Activated CD4-positive, alpha-beta T cell treated with anti-CD3 and anti-CD28 coated beads, Interleukin-2, amount 10 ng/mL, durations not matched to agents 24 days and 14 days (primary cell): ENCODE measurements at regions of chr6 and their contacts with region 1.

Region 1: DNA sequence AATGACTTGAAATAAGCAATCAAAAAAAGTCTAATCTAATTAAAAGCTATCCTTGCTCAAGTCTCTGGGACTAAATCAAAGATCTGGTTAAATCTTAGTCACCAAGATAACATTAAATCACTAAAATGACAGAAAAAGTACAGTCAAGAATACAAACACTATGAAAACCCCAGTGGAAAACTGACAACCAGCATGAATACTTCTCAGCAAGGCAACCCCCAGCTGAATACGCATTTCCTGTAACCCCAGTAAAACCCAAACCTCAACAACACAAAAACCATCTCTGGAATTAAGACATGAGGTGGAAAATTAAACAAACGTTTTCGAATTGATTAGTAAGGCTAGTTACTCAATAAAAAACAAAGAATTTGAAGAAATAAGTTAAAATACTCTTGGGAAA is 23.7 kb upstream of the ZC3H12D start:
- DNase-seq: peak; percentile 83
- H3K4me3 Mint-ChIP-seq: peak overlapping the region; percentile 33
- H3K27ac Mint-ChIP-seq: peak overlapping the region; percentile 92
- H3K4me1 Mint-ChIP-seq: peaks cover 41% of the 10 kb centered on the region
- H3K27me3 Mint-ChIP-seq: no peaks in the 10 kb centered on the region

Region 2: DNA sequence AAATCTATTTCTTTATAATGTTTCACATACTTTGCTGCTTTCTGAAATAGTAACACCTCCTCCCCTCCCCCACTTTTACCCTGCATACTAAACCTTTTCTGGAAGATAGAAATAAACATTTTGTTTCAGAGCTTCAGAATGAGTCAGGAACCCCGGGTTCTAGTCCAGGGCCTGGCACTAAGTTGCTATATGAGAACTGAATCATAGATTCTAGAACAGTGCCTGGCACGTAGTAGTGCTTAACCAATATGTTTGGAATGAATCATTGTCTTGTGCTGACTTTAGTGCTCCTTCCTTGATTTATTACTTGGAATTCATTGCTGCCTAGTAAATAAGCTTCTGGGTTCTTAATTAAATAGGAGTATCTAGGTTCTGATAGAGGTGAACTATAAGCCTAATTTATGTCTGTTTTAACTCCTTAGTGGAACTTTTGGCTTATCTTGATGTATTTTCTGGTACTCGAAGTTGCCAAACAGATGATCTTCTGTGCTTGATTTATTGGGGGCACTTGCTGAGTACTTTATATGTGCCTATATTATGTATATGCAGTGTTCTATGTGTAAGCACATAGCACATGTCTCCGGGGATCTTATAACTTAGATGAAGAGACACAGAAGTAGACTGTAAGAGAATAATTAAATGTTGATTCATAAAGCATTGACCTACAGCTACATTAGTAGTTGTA is 172.4 kb before region 1 on chr6:
- intact Hi-C with region 1: loop called (anchors 5 kb)
- DNase-seq: peak; percentile 72
- H3K4me3 Mint-ChIP-seq: peak overlapping the region; percentile 74
- H3K27ac Mint-ChIP-seq: peak overlapping the region; percentile 87
- H3K4me1 Mint-ChIP-seq: peaks cover 69% of the 10 kb centered on the region
- H3K27me3 Mint-ChIP-seq: no peaks in the 10 kb centered on the region

Region 3: DNA sequence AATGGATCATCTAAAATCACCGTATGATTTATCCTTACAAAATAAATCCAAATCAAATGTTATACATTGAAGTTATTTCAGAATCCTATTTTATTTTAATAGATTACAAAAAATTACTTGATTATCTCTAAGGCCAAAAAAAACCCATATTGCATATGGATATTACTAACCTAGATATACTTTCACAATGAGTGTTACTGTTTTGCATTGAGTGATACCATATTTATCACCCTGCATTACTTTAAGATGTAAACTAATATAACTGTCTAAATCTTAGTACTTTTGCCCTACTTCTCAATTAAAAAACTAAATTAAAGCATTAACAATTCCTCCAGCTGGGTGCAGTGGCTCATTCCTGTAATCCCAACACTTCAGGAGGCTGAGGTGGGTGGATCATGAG is 26.3 kb after region 1 on chr6:
- intact Hi-C with region 1: no loop called
- DNase-seq: no peak
- H3K4me3 Mint-ChIP-seq: no peak overlapping the region
- H3K27ac Mint-ChIP-seq: no peak overlapping the region
- H3K4me1 Mint-ChIP-seq: peaks cover 5% of the 10 kb centered on the region
- H3K27me3 Mint-ChIP-seq: no peaks in the 10 kb centered on the region